Common myeloid progenitor, CD34-positive (primary cell): ENCODE measurements at regions of chr16 and their contacts with region 1.

Region 1: GRCh38 chr16:46673320-46674013 is 15.5 kb downstream of the VPS35 start:
- DNase-seq: peak; percentile 70 to 88 (median 85)
- H3K4me3 ChIP-seq: no peak overlapping the region
- H3K27ac ChIP-seq: no peak overlapping the region
- H3K4me1 ChIP-seq: no peaks in the 10 kb centered on the region
- H3K27me3 ChIP-seq: no peaks in the 10 kb centered on the region

Region 2: DNA sequence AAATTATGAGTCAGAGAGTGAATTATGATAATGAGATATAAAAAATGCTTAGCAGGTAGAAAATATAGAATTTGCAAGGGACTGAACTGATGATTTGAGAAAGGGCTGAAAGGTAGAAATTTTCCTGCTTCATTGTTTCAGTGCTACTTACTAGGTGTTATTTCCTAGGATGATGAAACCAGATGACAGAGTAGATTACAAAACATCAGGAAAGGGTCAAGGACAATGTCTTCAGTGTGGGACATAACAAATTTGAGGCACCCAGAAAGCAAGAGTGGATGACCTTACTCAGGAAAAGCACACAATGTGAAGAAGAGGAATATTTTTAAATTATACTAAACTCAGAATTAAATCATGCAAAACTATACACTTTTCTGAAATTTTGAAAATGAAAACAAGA is 154.4 kb before region 1 on chr16:
- CTCF ChIA-PET with region 1: no interaction called
- POLR2A ChIA-PET with region 1: no interaction called
- DNase-seq: no peak
- H3K4me3 ChIP-seq: no peak overlapping the region
- H3K27ac ChIP-seq: no peak overlapping the region
- H3K4me1 ChIP-seq: no peaks in the 10 kb centered on the region
- H3K27me3 ChIP-seq: no peaks in the 10 kb centered on the region

Region 3: GRCh38 chr16:46658925-46659324 is 14.5 kb before region 1 on chr16:
- CTCF ChIA-PET with region 1: interaction called, 17 read pairs
- POLR2A ChIA-PET with region 1: no interaction called
- DNase-seq: peak; percentile 45 to 85 (median 80)
- H3K4me3 ChIP-seq: peak overlapping the region in 2 of 7 experiments; percentile 1 to 52
- H3K27ac ChIP-seq: peak overlapping the region; percentile 27 to 62
- H3K4me1 ChIP-seq: peaks cover 8 to 36% (median 16%) of the 10 kb centered on the region in 4 experiments
- H3K27me3 ChIP-seq: no peaks in the 10 kb centered on the region

Region 4: DNA sequence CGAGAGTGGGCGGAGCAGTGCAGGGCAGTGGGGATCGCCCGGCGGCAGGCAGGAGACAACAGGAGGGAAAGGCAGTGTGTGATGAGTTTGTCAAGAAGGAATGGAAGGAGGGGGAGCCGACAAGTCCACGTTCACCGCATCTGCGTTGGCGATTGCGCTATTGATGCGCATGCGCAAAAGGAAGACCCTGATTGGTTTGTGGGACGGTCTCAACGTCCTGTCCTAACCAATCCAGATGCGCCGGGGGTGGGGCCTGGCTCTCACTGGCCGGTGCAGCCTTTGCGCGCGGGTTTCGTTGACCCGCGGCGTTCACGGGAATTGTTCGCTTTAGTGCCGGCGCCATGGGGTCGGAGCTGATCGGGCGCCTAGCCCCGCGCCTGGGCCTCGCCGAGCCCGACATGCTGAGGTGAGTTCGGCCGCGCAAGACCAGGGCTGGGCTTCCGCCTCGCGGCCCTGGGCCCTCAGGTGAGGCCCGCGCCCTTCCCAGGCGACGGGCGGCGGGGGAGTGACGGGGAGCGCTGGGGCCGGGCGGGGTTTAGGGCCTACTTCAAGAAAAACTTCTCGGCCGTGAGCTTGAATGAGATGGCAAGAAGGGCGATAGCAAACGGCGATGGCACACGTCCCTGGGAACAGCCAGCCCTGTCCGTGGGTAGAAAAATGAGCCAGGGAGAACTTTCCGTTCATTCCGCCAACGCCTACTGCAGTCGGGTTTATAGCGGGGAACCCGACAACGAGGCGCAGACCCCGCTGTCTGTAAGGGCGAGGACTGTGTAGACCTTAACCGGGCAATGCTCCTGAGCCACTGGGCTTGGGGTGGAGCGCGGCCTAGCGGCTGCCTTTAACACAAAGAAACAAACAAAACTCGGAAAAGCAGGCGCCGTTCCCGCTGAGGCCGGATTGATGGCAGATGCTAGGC is 16.2 kb after region 1 on chr16 and contains the start of gene ORC6:
- CTCF ChIA-PET with region 1: interaction called, 24 read pairs
- POLR2A ChIA-PET with region 1: interaction called, 3 read pairs
- DNase-seq: peak; percentile 95 to 98 (median 97)
- H3K4me3 ChIP-seq: peak within 1 kb of the TSS; percentile 86 to 99 (median 94)
- H3K27ac ChIP-seq: peak within 1 kb of the TSS; percentile 94 to 97
- H3K4me1 ChIP-seq: peaks cover 18 to 44% (median 35%) of the 10 kb centered on the region in 4 experiments
- H3K27me3 ChIP-seq: no peaks in the 10 kb centered on the region

Region 5: GRCh38 chr16:46777804-46778475 is 104.5 kb after region 1 on chr16:
- CTCF ChIA-PET with region 1: no interaction called
- POLR2A ChIA-PET with region 1: no interaction called
- DNase-seq: no peak
- H3K4me3 ChIP-seq: no peak overlapping the region
- H3K27ac ChIP-seq: no peak overlapping the region
- H3K4me1 ChIP-seq: peaks cover 0 to 9% (median 0%) of the 10 kb centered on the region in 4 experiments
- H3K27me3 ChIP-seq: no peaks in the 10 kb centered on the region

Region 6: GRCh38 chr16:46801428-46802049 is 128.1 kb after region 1 on chr16:
- CTCF ChIA-PET with region 1: interaction called, 29 read pairs
- POLR2A ChIA-PET with region 1: interaction called, 3 read pairs
- DNase-seq: no peak
- H3K4me3 ChIP-seq: no peak overlapping the region
- H3K27ac ChIP-seq: no peak overlapping the region
- H3K4me1 ChIP-seq: no peaks in the 10 kb centered on the region
- H3K27me3 ChIP-seq: no peaks in the 10 kb centered on the region

Region 7: GRCh38 chr16:46908540-46909372 is 235.3 kb after region 1 on chr16:
- CTCF ChIA-PET with region 1: interaction called, 13 read pairs
- POLR2A ChIA-PET with region 1: no interaction called
- DNase-seq: peak; percentile 65 to 80 (median 73)
- H3K4me3 ChIP-seq: no peak overlapping the region
- H3K27ac ChIP-seq: no peak overlapping the region
- H3K4me1 ChIP-seq: no peaks in the 10 kb centered on the region
- H3K27me3 ChIP-seq: no peaks in the 10 kb centered on the region